ENCODE measurements at regions of chr20 and their contacts with region 1.

Region 1: DNA sequence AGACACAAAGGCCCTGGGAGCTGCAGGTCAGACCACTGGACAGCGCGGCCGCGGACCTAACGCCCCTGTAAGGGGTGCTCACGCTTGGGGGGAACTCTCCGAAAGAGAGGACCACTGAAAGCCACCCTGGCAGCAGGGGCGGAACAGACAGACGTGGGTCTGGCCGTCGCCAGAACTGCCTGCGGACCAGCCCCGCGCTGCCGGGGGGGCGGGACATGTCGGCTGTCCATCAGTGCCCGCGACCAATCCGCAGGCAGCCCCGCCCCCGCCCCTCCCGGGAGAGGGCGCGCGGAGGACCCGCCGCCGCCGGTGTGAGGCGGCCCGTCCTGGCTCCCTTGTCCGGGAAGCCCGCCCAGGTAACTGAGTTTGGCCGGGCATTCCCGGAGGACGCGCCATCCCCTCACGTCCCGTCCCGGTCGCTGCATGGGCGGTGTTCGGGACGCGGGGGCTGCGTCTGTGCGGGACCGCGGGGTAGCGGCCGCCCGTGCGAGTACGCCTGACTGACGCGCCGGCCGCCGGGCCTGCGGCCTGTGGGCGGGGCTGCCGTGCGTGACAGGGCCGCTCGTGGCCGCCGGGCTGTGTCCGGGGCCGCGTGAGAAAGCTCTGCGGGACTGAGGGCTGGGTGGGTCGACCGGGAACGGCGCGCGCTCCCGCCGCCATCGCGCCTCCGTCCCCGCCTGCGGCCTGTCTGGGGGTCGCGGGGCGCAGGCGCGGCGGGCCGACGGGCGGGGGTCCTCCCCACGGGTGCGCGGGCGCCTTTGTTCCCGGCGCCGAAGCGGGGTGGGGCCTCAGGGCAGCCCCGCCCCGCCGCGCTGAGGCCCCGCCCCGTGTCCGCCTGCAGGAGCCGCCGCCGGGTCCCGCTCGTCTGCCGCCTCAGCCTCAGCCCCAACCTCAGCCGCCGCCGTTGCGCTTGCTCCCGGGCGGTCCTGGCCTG is at the start of gene PLCG1:
- DNase-seq: peak; percentile 89
- H3K4me3 Mint-ChIP-seq: peak within 1 kb of the TSS; percentile 94
- H3K27ac Mint-ChIP-seq: peak within 1 kb of the TSS; percentile 92
- H3K4me1 Mint-ChIP-seq: peaks cover 64% of the 10 kb centered on the region
- H3K27me3 Mint-ChIP-seq: no peaks in the 10 kb centered on the region
- total RNA-seq, gene PLCG1: 133 to 139 TPM

Region 2: GRCh38 chr20:41003143-41003883 is 133.6 kb before region 1 on chr20:
- CTCF ChIA-PET with region 1: no interaction called
- POLR2A ChIA-PET with region 1: no interaction called
- intact Hi-C with region 1: loop called (anchors 1 kb)
- DNase-seq: peak; percentile 89
- H3K4me3 Mint-ChIP-seq: peak overlapping the region; percentile 67
- H3K27ac Mint-ChIP-seq: peak overlapping the region; percentile 99
- H3K4me1 Mint-ChIP-seq: peaks cover 46% of the 10 kb centered on the region
- H3K27me3 Mint-ChIP-seq: no peaks in the 10 kb centered on the region

Region 3: DNA sequence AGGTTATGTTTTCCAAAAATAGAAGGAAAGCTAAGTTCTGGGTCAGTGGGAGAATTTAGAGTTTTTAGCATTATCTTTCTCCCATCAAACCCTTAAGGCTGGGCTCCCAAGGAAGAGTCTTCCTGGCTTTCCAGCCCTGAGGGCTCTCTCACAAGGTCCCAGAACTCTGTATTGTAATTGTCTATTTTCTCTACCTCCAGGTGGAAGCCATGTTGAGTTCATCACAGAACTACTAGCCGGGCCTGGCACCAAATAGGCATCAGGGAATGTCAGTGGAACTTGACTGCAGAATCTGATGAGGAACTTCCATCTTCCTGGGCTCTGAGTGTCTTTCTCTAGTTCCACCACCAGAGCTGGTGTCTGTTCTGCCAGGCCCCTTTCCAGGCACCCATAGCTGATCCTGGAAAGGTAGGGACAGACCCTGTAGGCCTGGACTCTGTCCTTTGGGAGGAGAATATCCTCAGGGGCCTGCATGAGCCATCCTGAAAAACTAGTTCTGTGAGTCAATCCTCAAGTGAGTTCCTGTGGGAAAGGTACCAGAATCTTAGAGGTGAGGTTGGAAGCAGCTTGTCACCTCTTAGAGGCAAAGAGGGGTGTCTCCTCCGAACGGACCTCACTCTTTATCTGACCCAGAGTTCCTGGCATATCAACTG is 119.4 kb before region 1 on chr20:
- CTCF ChIA-PET with region 1: no interaction called
- POLR2A ChIA-PET with region 1: no interaction called
- intact Hi-C with region 1: no loop called
- DNase-seq: no peak
- H3K4me3 Mint-ChIP-seq: no peak overlapping the region
- H3K27ac Mint-ChIP-seq: no peak overlapping the region
- H3K4me1 Mint-ChIP-seq: peaks cover 6% of the 10 kb centered on the region
- H3K27me3 Mint-ChIP-seq: no peaks in the 10 kb centered on the region

Region 4: GRCh38 chr20:41125530-41126457 is 11.2 kb before region 1 on chr20:
- CTCF ChIA-PET with region 1: interaction called, 28 read pairs
- POLR2A ChIA-PET with region 1: no interaction called
- intact Hi-C with region 1: no loop called
- DNase-seq: no peak
- H3K4me3 Mint-ChIP-seq: no peak overlapping the region
- H3K27ac Mint-ChIP-seq: no peak overlapping the region
- H3K4me1 Mint-ChIP-seq: peaks cover 12% of the 10 kb centered on the region
- H3K27me3 Mint-ChIP-seq: no peaks in the 10 kb centered on the region

Region 5: GRCh38 chr20:41173161-41173721 is 36.3 kb after region 1 on chr20:
- CTCF ChIA-PET with region 1: interaction called, 39 read pairs
- POLR2A ChIA-PET with region 1: no interaction called
- intact Hi-C with region 1: loop called (anchors 5 kb)
- DNase-seq: peak; percentile 71
- H3K4me3 Mint-ChIP-seq: no peak overlapping the region
- H3K27ac Mint-ChIP-seq: peak overlapping the region; percentile 10
- H3K4me1 Mint-ChIP-seq: peaks cover 6% of the 10 kb centered on the region
- H3K27me3 Mint-ChIP-seq: no peaks in the 10 kb centered on the region

Region 6: GRCh38 chr20:41317536-41318270 is 180.8 kb after region 1 on chr20 and contains the start of gene ZHX3:
- CTCF ChIA-PET with region 1: interaction called, 5 read pairs
- POLR2A ChIA-PET with region 1: no interaction called
- intact Hi-C with region 1: loop called (anchors 5 kb)
- DNase-seq: peak; percentile 97
- H3K4me3 Mint-ChIP-seq: peak within 1 kb of the TSS; percentile 67
- H3K27ac Mint-ChIP-seq: peak within 1 kb of the TSS; percentile 14
- H3K4me1 Mint-ChIP-seq: peaks cover 20% of the 10 kb centered on the region
- H3K27me3 Mint-ChIP-seq: no peaks in the 10 kb centered on the region
- total RNA-seq, gene ZHX3: 9.4 to 11.3 TPM

Region 7: GRCh38 chr20:41436679-41437078 is 299.7 kb after region 1 on chr20:
- CTCF ChIA-PET with region 1: no interaction called
- POLR2A ChIA-PET with region 1: no interaction called
- intact Hi-C with region 1: loop called (anchors 10 kb)
- DNase-seq: no peak
- H3K4me3 Mint-ChIP-seq: no peak overlapping the region
- H3K27ac Mint-ChIP-seq: no peak overlapping the region
- H3K4me1 Mint-ChIP-seq: peaks cover 40% of the 10 kb centered on the region
- H3K27me3 Mint-ChIP-seq: no peaks in the 10 kb centered on the region

Measured in activated CD4-positive, alpha-beta memory T cell treated with anti-CD3 and anti-CD28 coated beads for 36 hours (primary cell).